Activated naive CD4-positive, alpha-beta T cell treated with anti-CD3 and anti-CD28 coated beads for 36 hours (primary cell): ENCODE measurements at regions of chr3 and their contacts with region 1.

Region 1: GRCh38 chr3:113736548-113737089 is 9.4 kb downstream of the NAA50 start:
- DNase-seq: no peak
- H3K4me3 Mint-ChIP-seq: no peak overlapping the region
- H3K27ac Mint-ChIP-seq: peak overlapping the region; percentile 56
- H3K4me1 Mint-ChIP-seq: peaks cover 65% of the 10 kb centered on the region
- H3K27me3 Mint-ChIP-seq: no peaks in the 10 kb centered on the region

Region 2: GRCh38 chr3:113304856-113305540 is 431.6 kb before region 1 on chr3:
- CTCF ChIA-PET with region 1: no interaction called
- intact Hi-C with region 1: no loop called
- DNase-seq: no peak
- H3K4me3 Mint-ChIP-seq: no peak overlapping the region
- H3K27ac Mint-ChIP-seq: no peak overlapping the region
- H3K4me1 Mint-ChIP-seq: no peaks in the 10 kb centered on the region
- H3K27me3 Mint-ChIP-seq: no peaks in the 10 kb centered on the region

Region 3: GRCh38 chr3:113804661-113805060 is 68.0 kb after region 1 on chr3:
- CTCF ChIA-PET with region 1: no interaction called
- intact Hi-C with region 1: no loop called
- DNase-seq: no peak
- H3K4me3 Mint-ChIP-seq: no peak overlapping the region
- H3K27ac Mint-ChIP-seq: no peak overlapping the region
- H3K4me1 Mint-ChIP-seq: peaks cover 3% of the 10 kb centered on the region
- H3K27me3 Mint-ChIP-seq: no peaks in the 10 kb centered on the region

Region 4: GRCh38 chr3:113838631-113839209 is 102.1 kb after region 1 on chr3 and contains the start of gene GRAMD1C:
- CTCF ChIA-PET with region 1: interaction called, 7 read pairs
- intact Hi-C with region 1: loop called (anchors 1 kb)
- DNase-seq: peak; percentile 89
- H3K4me3 Mint-ChIP-seq: peak within 1 kb of the TSS; percentile 75
- H3K27ac Mint-ChIP-seq: no peak within 1 kb of the TSS
- H3K4me1 Mint-ChIP-seq: peaks cover 6% of the 10 kb centered on the region
- H3K27me3 Mint-ChIP-seq: no peaks in the 10 kb centered on the region
- total RNA-seq, gene GRAMD1C: 0.67 to 1.3 TPM

Region 5: DNA sequence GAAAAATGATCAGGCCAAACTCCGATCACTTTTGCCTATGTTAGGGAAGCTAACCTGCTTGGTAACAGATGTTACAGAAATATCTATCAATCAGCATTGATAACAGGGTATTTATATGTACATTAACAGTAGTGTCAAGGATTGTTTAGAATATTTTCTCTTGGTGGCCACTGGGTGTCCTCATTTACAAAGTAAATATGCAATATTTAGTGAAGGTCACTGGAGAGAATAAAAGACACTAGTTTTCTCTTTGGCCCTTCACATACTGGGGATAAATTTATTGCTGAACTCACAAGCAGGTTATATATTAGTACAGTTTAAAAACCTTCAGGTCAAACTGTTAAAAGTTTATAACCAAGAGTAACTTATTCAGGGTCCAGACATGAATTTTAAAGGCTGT is 626.2 kb after region 1 on chr3:
- CTCF ChIA-PET with region 1: no interaction called
- intact Hi-C with region 1: no loop called
- DNase-seq: no peak
- H3K4me3 Mint-ChIP-seq: no peak overlapping the region
- H3K27ac Mint-ChIP-seq: no peak overlapping the region
- H3K4me1 Mint-ChIP-seq: peaks cover 2% of the 10 kb centered on the region
- H3K27me3 Mint-ChIP-seq: no peaks in the 10 kb centered on the region